ENCODE measurements at regions of chr19 and their contacts with region 1.

Region 1: GRCh38 chr19:38929929-38930775 is at the start of gene SARS2:
- DNase-seq: no peak
- ATAC-seq: peak; percentile 69
- H3K4me3 ChIP-seq: peak within 1 kb of the TSS; percentile 79 to 93 (median 91)
- H3K4me3 Mint-ChIP-seq: peak within 1 kb of the TSS; percentile 99
- H3K27ac ChIP-seq: peak within 1 kb of the TSS; percentile 84 to 91
- H3K27ac Mint-ChIP-seq: peak within 1 kb of the TSS; percentile 99
- H3K4me1 ChIP-seq: peaks cover 19 to 28% of the 10 kb centered on the region in 2 donors
- H3K4me1 Mint-ChIP-seq: peaks cover 26% of the 10 kb centered on the region
- H3K27me3 ChIP-seq: no peaks in the 10 kb centered on the region
- H3K27me3 Mint-ChIP-seq: no peaks in the 10 kb centered on the region
- CTCF ChIP-seq: peak; percentile 100
- total RNA-seq, gene SARS2: 32.0 and 38.1 TPM in 2 replicates

Region 2: DNA sequence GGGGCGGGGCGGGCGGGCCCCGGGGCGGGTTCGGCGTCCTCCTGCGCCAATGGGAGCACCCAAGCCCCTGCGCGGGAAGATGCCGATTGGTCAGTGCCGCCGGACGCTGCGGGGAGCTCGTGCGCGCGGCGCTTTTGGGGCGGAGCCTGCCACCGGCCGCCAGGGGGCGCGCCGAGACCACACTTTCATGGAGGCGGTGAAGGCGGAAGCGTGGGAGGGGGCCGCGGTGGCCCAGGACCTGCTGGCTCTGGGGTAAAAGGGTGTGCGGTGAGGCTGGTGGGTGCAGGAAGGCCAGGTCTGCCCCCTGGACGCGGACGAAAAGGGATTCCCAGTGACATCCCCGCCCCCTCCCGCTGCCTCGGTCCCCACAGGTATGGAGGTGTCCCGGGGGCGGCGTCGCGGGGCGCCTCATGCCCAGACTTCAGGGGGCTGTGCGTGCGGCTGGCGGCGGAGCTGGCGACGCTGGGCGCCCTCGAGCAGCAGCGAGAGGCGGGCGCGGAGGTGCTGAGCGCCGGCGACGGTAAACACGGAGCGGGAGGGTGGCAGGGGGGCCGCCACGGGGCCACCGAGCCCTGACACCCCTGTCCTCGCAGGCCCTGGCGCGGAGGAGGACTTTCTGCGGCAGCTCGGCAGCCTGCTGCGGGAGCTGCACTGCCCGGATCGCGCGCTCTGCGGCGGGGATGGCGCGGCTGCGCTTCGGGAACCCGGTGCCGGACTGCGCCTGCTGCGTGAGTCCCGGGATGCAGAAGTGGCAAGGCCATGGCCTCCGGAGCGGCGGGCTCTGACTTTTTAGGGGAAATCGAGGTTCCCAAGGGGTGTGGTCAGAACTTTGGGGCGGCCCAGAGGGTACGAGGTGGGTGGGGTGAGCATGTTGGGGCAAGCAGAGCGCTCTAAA is 526.9 kb before region 1 on chr19 and contains the start of gene FAM98C:
- CTCF ChIA-PET with region 1: interaction called, 55 read pairs
- POLR2A ChIA-PET with region 1: interaction called, 3 read pairs
- intact Hi-C with region 1: loop called (anchors 1 kb)
- DNase-seq: peak; percentile 99
- ATAC-seq: peak; percentile 97
- H3K4me3 ChIP-seq: peak within 1 kb of the TSS; percentile 41 to 85 (median 75)
- H3K4me3 Mint-ChIP-seq: peak within 1 kb of the TSS; percentile 94
- H3K27ac ChIP-seq: peak within 1 kb of the TSS; percentile 61 to 79
- H3K27ac Mint-ChIP-seq: peak within 1 kb of the TSS; percentile 94
- H3K4me1 ChIP-seq: peaks cover 5 to 14% of the 10 kb centered on the region in 2 donors
- H3K4me1 Mint-ChIP-seq: peaks cover 18% of the 10 kb centered on the region
- H3K27me3 ChIP-seq: peaks cover 0 to 20% (median 7%) of the 10 kb centered on the region in 4 experiments
- H3K27me3 Mint-ChIP-seq: peaks cover 18% of the 10 kb centered on the region
- CTCF ChIP-seq: peak; percentile 99
- total RNA-seq, gene FAM98C: 44.1 and 45.3 TPM in 2 replicates

Region 3: GRCh38 chr19:38634757-38635482 is 295.2 kb before region 1 on chr19:
- CTCF ChIA-PET with region 1: interaction called, 26 read pairs
- POLR2A ChIA-PET with region 1: no interaction called
- intact Hi-C with region 1: loop called (anchors 1 kb)
- DNase-seq: peak; percentile 80
- ATAC-seq: peak; percentile 50
- H3K4me3 ChIP-seq: no peak overlapping the region
- H3K4me3 Mint-ChIP-seq: no peak overlapping the region
- H3K27ac ChIP-seq: peak overlapping the region in 1 of 2 donors; percentile 30
- H3K27ac Mint-ChIP-seq: peak overlapping the region; percentile 83
- H3K4me1 ChIP-seq: peaks cover 18 to 23% of the 10 kb centered on the region in 2 donors
- H3K4me1 Mint-ChIP-seq: peaks cover 21% of the 10 kb centered on the region
- H3K27me3 ChIP-seq: no peaks in the 10 kb centered on the region
- H3K27me3 Mint-ChIP-seq: no peaks in the 10 kb centered on the region
- CTCF ChIP-seq: peak; percentile 97

Region 4: GRCh38 chr19:38729653-38730469 is 200.3 kb before region 1 on chr19:
- CTCF ChIA-PET with region 1: interaction called, 51 read pairs
- POLR2A ChIA-PET with region 1: interaction called, 4 read pairs
- intact Hi-C with region 1: loop called (anchors 1 kb)
- DNase-seq: peak; percentile 84
- ATAC-seq: peak; percentile 68
- H3K4me3 ChIP-seq: no peak overlapping the region
- H3K4me3 Mint-ChIP-seq: no peak overlapping the region
- H3K27ac ChIP-seq: no peak overlapping the region
- H3K27ac Mint-ChIP-seq: peak overlapping the region; percentile 39
- H3K4me1 ChIP-seq: peaks cover 16 to 23% of the 10 kb centered on the region in 2 donors
- H3K4me1 Mint-ChIP-seq: peaks cover 23% of the 10 kb centered on the region
- H3K27me3 ChIP-seq: no peaks in the 10 kb centered on the region
- H3K27me3 Mint-ChIP-seq: no peaks in the 10 kb centered on the region
- CTCF ChIP-seq: peak; percentile 85

Region 5: DNA sequence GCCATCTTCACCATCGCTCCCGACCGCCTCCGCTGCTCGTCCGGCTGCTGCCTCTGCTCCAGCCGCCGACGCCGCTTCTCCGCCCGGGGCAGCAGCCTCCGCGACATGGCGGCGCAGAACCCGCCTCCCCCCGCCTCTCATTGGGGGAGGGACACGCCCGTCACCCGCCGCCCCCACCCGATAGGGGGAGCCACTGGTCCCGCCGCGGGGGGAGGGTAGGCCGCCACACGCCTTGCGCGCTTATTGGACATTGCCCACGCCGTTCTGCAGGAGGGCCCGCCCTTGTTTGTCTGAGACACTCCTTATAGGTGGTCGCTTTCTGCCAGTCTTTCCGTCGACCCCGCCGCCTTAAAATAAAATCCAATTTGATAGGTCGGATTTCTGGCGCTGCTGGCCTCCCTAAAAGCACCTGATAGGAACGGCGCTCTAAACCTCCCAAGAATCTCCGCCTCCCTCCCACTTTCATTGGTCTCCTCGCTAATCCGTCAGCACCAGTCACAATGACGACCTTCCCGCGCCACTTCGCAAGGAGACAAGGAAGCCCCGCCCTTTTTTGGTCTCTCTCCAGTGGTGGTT is 80.2 kb before region 1 on chr19 and contains the start of gene HNRNPL:
- CTCF ChIA-PET with region 1: interaction called, 12 read pairs
- POLR2A ChIA-PET with region 1: interaction called, 3 read pairs
- intact Hi-C with region 1: no loop called
- DNase-seq: peak; percentile 100
- ATAC-seq: peak; percentile 60
- H3K4me3 ChIP-seq: peak within 1 kb of the TSS; percentile 63 to 95 (median 83)
- H3K4me3 Mint-ChIP-seq: peak within 1 kb of the TSS; percentile 92
- H3K27ac ChIP-seq: peak within 1 kb of the TSS; percentile 82 to 98
- H3K27ac Mint-ChIP-seq: peak within 1 kb of the TSS; percentile 99
- H3K4me1 ChIP-seq: peaks cover 37 to 51% of the 10 kb centered on the region in 2 donors
- H3K4me1 Mint-ChIP-seq: peaks cover 56% of the 10 kb centered on the region
- H3K27me3 ChIP-seq: no peaks in the 10 kb centered on the region
- H3K27me3 Mint-ChIP-seq: no peaks in the 10 kb centered on the region
- CTCF ChIP-seq: peak; percentile 37
- total RNA-seq, gene HNRNPL: 397 and 418 TPM in 2 replicates

Region 6: GRCh38 chr19:39532233-39533002 is 602.3 kb after region 1 on chr19 and contains the start of gene EID2B:
- CTCF ChIA-PET with region 1: no interaction called
- POLR2A ChIA-PET with region 1: no interaction called
- intact Hi-C with region 1: no loop called
- DNase-seq: peak; percentile 97
- ATAC-seq: peak; percentile 99
- H3K4me3 ChIP-seq: peak within 1 kb of the TSS; percentile 75 to 98 (median 78)
- H3K4me3 Mint-ChIP-seq: peak within 1 kb of the TSS; percentile 96
- H3K27ac ChIP-seq: peak within 1 kb of the TSS; percentile 37 to 83
- H3K27ac Mint-ChIP-seq: peak within 1 kb of the TSS; percentile 92
- H3K4me1 ChIP-seq: peaks cover 13 to 14% of the 10 kb centered on the region in 2 donors
- H3K4me1 Mint-ChIP-seq: peaks cover 25% of the 10 kb centered on the region
- H3K27me3 ChIP-seq: no peaks in the 10 kb centered on the region
- H3K27me3 Mint-ChIP-seq: no peaks in the 10 kb centered on the region
- CTCF ChIP-seq: peak; percentile 98
- total RNA-seq, gene EID2B: 6.0 and 7.6 TPM in 2 replicates

Measured in B cell (primary cell).